ENCODE measurements at regions of chr17 and their contacts with region 1.

Region 1: GRCh38 chr17:28494445-28495188 is 11.5 kb upstream of the FOXN1 start:
- DNase-seq: peak; percentile 71
- H3K4me3 Mint-ChIP-seq: no peak overlapping the region
- H3K27ac Mint-ChIP-seq: no peak overlapping the region
- H3K4me1 Mint-ChIP-seq: peaks cover 8% of the 10 kb centered on the region
- H3K27me3 Mint-ChIP-seq: no peaks in the 10 kb centered on the region
- CTCF ChIP-seq: peak; percentile 88

Region 2: DNA sequence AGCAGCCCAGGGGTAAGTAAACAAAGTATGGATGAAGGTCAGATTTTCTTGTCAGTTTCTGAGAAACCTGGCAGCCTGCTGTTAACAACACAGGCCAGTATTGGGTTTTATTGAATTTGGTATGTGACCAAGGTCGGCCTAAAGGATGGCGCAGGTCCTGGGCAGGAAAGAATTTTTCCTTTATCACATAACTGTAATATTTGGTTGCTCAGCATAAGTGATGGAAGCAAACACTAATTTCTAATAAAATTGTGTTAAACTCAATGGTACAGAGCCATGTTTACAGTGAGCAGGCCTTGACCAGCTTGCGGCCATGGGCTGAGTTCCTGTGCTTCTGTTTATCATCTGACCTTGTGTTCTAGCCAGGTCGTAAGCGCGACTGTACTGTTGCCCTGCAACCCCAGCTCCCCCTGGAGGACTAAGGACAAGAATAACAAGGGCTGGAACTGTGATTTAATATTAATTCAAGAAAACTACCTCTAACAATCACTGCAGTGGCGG is 147.8 kb before region 1 on chr17:
- CTCF ChIA-PET with region 1: interaction called, 11 read pairs
- POLR2A ChIA-PET with region 1: interaction called, 13 read pairs
- intact Hi-C with region 1: no loop called
- DNase-seq: no peak
- H3K4me3 Mint-ChIP-seq: no peak overlapping the region
- H3K27ac Mint-ChIP-seq: peak overlapping the region; percentile 59
- H3K4me1 Mint-ChIP-seq: peaks cover 12% of the 10 kb centered on the region
- H3K27me3 Mint-ChIP-seq: no peaks in the 10 kb centered on the region
- CTCF ChIP-seq: no peak

Region 3: GRCh38 chr17:28384281-28385036 is 110.2 kb before region 1 on chr17:
- CTCF ChIA-PET with region 1: interaction called, 3 read pairs
- POLR2A ChIA-PET with region 1: interaction called, 10 read pairs
- intact Hi-C with region 1: no loop called
- DNase-seq: no peak
- H3K4me3 Mint-ChIP-seq: no peak overlapping the region
- H3K27ac Mint-ChIP-seq: no peak overlapping the region
- H3K4me1 Mint-ChIP-seq: peaks cover 13% of the 10 kb centered on the region
- H3K27me3 Mint-ChIP-seq: no peaks in the 10 kb centered on the region
- CTCF ChIP-seq: no peak

Region 4: DNA sequence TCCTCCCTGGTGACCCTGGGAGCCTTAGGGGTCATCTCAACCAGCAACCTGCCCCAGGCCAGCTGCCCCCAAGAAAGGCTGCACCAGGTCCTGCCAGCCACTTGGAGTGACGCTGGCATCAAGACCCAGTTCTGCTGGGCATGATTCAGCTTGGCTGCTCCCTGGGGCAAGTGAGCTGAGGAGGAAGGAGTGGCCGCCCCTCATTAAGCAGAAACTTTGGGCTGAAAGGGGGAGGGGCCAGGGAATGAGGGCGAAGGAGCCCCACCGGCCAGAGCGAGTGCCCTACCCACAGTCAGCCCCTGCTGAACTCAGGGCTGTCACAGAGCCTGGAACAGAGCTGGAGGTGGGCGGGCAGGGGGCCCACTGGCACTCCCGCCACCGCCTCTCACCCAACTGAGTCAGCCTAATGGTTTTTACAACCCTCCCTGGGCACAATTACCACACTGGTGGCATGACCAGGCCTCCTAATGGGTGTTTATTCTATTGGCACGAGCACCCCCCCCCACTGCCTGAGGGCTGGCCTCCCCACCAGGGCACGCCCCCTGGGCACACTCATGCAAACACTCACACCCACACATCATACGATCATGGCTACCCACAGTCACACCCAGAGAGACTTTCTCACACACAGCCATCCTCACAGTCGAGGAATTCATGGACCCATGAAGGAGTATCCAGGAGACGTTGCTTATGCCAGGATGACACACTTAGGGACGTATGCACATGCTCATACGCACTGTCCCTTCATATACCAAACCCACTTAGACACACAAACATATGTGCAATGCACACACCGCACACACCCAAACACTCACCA is 38.6 kb after region 1 on chr17:
- CTCF ChIA-PET with region 1: interaction called, 49 read pairs
- POLR2A ChIA-PET with region 1: interaction called, 4 read pairs
- intact Hi-C with region 1: no loop called
- DNase-seq: peak; percentile 38
- H3K4me3 Mint-ChIP-seq: no peak overlapping the region
- H3K27ac Mint-ChIP-seq: no peak overlapping the region
- H3K4me1 Mint-ChIP-seq: peaks cover 19% of the 10 kb centered on the region
- H3K27me3 Mint-ChIP-seq: peaks cover 12% of the 10 kb centered on the region
- CTCF ChIP-seq: no peak

Region 5: GRCh38 chr17:28552246-28552999 is 57.8 kb after region 1 on chr17 and contains the start of gene UNC119:
- CTCF ChIA-PET with region 1: interaction called, 10 read pairs
- POLR2A ChIA-PET with region 1: interaction called, 3 read pairs
- intact Hi-C with region 1: loop called (anchors 2 kb)
- DNase-seq: peak; percentile 74
- H3K4me3 Mint-ChIP-seq: peak within 1 kb of the TSS; percentile 75
- H3K27ac Mint-ChIP-seq: no peak within 1 kb of the TSS
- H3K4me1 Mint-ChIP-seq: no peaks in the 10 kb centered on the region
- H3K27me3 Mint-ChIP-seq: no peaks in the 10 kb centered on the region
- CTCF ChIP-seq: no peak
- total RNA-seq, gene UNC119: 12.5 and 13.7 TPM in 2 replicates

Region 6: DNA sequence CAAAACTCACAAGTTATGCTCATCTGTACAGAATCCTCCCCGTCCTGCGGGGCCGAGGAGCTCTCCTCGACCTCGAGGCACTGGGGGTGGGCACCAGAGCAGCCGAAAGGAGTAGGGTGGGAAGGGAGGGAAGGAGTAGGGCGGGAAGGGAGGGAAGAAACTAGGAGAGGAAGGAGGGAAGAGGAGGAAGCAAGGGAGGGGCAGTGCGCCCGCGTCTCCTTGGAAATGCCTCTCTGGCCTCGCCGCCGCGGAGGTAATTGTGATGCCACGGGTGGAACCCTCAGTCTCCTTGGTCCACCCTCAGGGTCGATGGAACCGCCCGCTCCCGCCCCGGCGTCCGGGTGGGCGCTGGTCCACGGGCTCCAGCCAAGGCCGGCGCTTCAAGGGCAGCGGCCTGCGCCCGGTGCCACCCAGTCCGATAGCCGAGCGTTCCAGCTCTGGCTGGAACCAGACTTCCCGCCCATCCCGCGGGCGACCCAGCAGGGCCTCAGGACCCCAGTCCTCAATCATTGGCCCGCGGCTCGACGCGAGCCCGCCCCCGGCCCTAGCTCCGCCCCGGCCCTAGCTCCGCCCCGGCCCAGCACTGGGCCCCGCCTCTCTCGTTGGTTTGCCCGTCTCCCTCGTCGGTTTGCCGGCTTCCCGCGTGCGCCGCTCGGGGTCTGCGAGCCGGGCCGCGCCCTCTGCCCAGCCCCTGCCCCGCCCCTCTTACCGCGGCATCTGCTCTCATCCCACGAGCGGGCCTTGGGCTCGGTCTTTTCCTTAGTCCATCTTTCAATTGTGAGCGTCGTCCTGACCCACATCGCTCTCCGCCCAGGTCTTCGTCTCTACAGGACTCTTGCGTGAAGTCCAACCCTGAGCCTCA is 216.5 kb after region 1 on chr17:
- CTCF ChIA-PET with region 1: no interaction called
- POLR2A ChIA-PET with region 1: no interaction called
- intact Hi-C with region 1: no loop called
- DNase-seq: peak; percentile 83
- H3K4me3 Mint-ChIP-seq: peak overlapping the region; percentile 71
- H3K27ac Mint-ChIP-seq: peak overlapping the region; percentile 72
- H3K4me1 Mint-ChIP-seq: peaks cover 28% of the 10 kb centered on the region
- H3K27me3 Mint-ChIP-seq: no peaks in the 10 kb centered on the region
- CTCF ChIP-seq: no peak